Activated CD4-positive, alpha-beta memory T cell treated with anti-CD3 and anti-CD28 coated beads, Interleukin-2, amount 10 ng/mL, durations not matched to agents 7 days and 5 days (primary cell): ENCODE measurements at regions of chr6 and their contacts with region 1.

Region 1: DNA sequence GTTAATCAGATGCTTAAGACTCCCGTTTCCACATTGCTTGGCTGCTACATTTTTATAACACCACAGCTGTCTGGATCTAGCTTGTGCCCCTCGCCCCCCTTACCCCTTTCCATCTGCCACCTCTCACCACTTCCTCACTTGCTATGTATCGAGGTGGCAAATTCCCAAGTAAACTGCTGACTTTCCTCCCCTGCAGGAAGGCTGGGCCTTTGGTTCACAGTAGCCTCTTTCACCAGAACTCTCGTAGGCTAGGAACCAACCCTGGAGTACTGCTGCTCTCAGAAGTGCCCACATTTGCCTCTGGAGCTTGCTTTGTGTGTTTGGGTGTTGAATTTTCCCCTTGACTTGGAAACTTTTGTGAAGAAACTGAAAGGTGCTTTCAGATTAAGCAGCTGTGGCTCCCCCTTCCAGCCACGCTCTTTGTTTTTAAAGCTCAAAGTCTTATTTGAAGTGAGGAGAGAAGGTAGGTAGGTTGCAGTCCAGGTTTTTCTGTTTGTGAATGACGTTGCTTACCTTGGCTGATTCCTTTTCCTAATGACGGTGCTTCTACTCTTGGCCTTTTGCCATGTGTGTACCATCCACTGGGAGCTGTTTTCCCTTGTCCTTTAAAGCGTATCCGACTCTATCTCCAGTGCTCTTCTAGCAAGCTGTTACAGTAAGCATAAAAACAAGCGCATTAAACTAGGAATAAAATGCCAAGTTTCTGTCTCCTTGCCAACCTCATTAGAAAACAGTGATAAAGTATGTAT is 90.4 kb downstream of the CARMIL1 start:
- DNase-seq: no peak
- H3K4me3 Mint-ChIP-seq: peak overlapping the region; percentile 5
- H3K27ac Mint-ChIP-seq: no peak overlapping the region
- H3K4me1 Mint-ChIP-seq: peaks cover 58% of the 10 kb centered on the region
- H3K27me3 Mint-ChIP-seq: no peaks in the 10 kb centered on the region

Region 2: GRCh38 chr6:25330796-25331685 is 38.6 kb before region 1 on chr6:
- CTCF ChIA-PET with region 1: no interaction called
- POLR2A ChIA-PET with region 1: no interaction called
- DNase-seq: no peak
- H3K4me3 Mint-ChIP-seq: no peak overlapping the region
- H3K27ac Mint-ChIP-seq: no peak overlapping the region
- H3K4me1 Mint-ChIP-seq: no peaks in the 10 kb centered on the region
- H3K27me3 Mint-ChIP-seq: peaks cover 8% of the 10 kb centered on the region

Region 3: DNA sequence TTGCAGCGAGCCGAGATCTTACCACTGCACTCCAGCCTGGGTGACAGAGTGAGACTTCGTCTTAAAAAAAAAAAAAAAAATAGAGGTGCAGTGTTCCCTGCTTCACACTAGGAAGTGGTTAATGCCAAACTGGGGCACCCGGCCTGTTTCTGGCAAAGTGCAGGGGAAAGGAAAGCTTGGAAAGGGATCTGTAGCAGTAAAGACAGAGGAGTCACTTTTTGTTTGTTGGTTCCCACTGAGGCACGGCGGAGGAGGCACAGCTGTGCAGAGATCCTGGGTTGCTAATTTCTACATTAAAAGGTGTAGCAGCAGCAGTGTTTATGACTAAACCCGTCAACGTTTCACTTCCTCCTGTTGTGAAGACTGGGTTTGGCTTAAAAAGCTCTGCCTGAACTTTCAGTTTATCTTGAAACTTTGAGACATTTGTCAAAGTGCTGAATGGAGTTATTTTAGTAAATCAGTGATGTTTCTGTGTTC is 35.1 kb after region 1 on chr6:
- CTCF ChIA-PET with region 1: interaction called, 8 read pairs
- POLR2A ChIA-PET with region 1: interaction called, 17 read pairs
- DNase-seq: peak; percentile 58
- H3K4me3 Mint-ChIP-seq: peak overlapping the region; percentile 76
- H3K27ac Mint-ChIP-seq: no peak overlapping the region
- H3K4me1 Mint-ChIP-seq: no peaks in the 10 kb centered on the region
- H3K27me3 Mint-ChIP-seq: no peaks in the 10 kb centered on the region

Region 4: GRCh38 chr6:25499615-25500235 is 130.1 kb after region 1 on chr6:
- CTCF ChIA-PET with region 1: no interaction called
- POLR2A ChIA-PET with region 1: no interaction called
- DNase-seq: no peak
- H3K4me3 Mint-ChIP-seq: no peak overlapping the region
- H3K27ac Mint-ChIP-seq: no peak overlapping the region
- H3K4me1 Mint-ChIP-seq: no peaks in the 10 kb centered on the region
- H3K27me3 Mint-ChIP-seq: no peaks in the 10 kb centered on the region